Naive thymus-derived CD4-positive, alpha-beta T cell (primary cell): ENCODE measurements at regions of chr9 and their contacts with region 1.

Region 1: GRCh38 chr9:137034863-137035761 is 3.2 kb upstream of the FUT7 start:
- DNase-seq: peak; percentile 74 to 88 (median 82)
- ATAC-seq: peak; percentile 84
- H3K4me3 ChIP-seq: peak overlapping the region; percentile 34
- H3K4me3 Mint-ChIP-seq: peak overlapping the region; percentile 55 to 81 (median 66)
- H3K27ac ChIP-seq: no peak overlapping the region
- H3K27ac Mint-ChIP-seq: peak overlapping the region in 4 of 9 donors; percentile 19 to 85 (median 43)
- H3K4me1 ChIP-seq: peaks cover 36 to 41% of the 10 kb centered on the region in 2 donors
- H3K4me1 Mint-ChIP-seq: peaks cover 11 to 36% (median 24%) of the 10 kb centered on the region in 7 donors
- H3K27me3 ChIP-seq: no peaks in the 10 kb centered on the region
- H3K27me3 Mint-ChIP-seq: peaks cover 0 to 3% (median 0%) of the 10 kb centered on the region in 5 donors

Region 2: GRCh38 chr9:136949817-136950655 is 85.1 kb before region 1 on chr9:
- CTCF ChIA-PET with region 1: interaction called, 3 read pairs
- POLR2A ChIA-PET with region 1: no interaction called
- intact Hi-C with region 1: loop called (anchors 2 kb)
- DNase-seq: peak; percentile 89 to 97 (median 95)
- ATAC-seq: peak; percentile 97
- H3K4me3 ChIP-seq: peak overlapping the region; percentile 68
- H3K4me3 Mint-ChIP-seq: peak overlapping the region; percentile 74 to 93 (median 86)
- H3K27ac ChIP-seq: peak overlapping the region; percentile 81
- H3K27ac Mint-ChIP-seq: peak overlapping the region; percentile 66 to 91 (median 86)
- H3K4me1 ChIP-seq: peaks cover 4 to 13% of the 10 kb centered on the region in 2 donors
- H3K4me1 Mint-ChIP-seq: peaks cover 0 to 13% (median 0%) of the 10 kb centered on the region in 7 donors
- H3K27me3 ChIP-seq: no peaks in the 10 kb centered on the region
- H3K27me3 Mint-ChIP-seq: no peaks in the 10 kb centered on the region

Region 3: GRCh38 chr9:137000177-137000883 is 34.8 kb before region 1 on chr9:
- CTCF ChIA-PET with region 1: interaction called, 6 read pairs
- POLR2A ChIA-PET with region 1: interaction called, 3 read pairs
- intact Hi-C with region 1: loop called in 1 of 2 experiments (anchors 1 kb)
- DNase-seq: no peak
- ATAC-seq: peak; percentile 65
- H3K4me3 ChIP-seq: no peak overlapping the region
- H3K4me3 Mint-ChIP-seq: peak overlapping the region in 2 of 10 donors; percentile 33 to 57
- H3K27ac ChIP-seq: no peak overlapping the region
- H3K27ac Mint-ChIP-seq: peak overlapping the region in 3 of 9 donors; percentile 41 to 78 (median 42)
- H3K4me1 ChIP-seq: peaks cover 5 to 50% of the 10 kb centered on the region in 2 donors
- H3K4me1 Mint-ChIP-seq: peaks cover 7 to 39% (median 11%) of the 10 kb centered on the region in 7 donors
- H3K27me3 ChIP-seq: no peaks in the 10 kb centered on the region
- H3K27me3 Mint-ChIP-seq: peaks cover 0 to 12% (median 5%) of the 10 kb centered on the region in 5 donors

Region 4: DNA sequence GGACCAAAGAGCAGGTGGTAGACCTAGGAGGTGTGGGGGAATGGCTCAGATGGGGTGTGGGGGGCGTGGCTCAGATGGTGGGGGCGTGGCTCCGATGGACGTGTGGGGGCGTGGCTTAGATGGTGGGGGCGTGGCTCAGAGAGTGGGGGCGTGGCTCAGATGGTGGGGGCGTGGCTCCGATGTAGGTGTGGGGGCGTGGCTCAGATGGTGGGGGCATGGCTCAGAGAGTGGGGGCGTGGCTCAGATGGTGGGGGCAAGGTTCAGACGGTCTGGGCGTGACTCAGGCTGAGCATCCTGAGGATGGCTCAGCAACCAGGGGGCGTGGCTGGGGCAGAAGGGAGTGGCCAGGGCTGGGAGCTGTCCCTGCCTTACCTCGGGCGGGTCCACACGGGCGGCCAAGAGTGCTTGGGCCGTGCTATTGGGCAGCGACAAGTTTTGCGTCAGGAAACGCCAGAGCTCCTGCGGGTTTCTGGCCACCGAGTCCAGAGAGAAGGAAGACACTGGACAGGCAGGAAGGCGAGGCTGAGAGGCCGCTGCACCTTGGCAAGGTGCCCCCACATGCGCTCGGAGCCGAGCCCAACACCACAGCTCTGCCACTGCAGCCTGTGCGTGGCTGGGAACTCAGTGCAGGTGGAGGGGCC is 13.0 kb before region 1 on chr9:
- CTCF ChIA-PET with region 1: interaction called, 15 read pairs
- POLR2A ChIA-PET with region 1: interaction called, 7 read pairs
- intact Hi-C with region 1: no loop called
- DNase-seq: peak in 5 of 9 donors; percentile 35 to 76 (median 39)
- ATAC-seq: peak; percentile 95
- H3K4me3 ChIP-seq: no peak overlapping the region
- H3K4me3 Mint-ChIP-seq: no peak overlapping the region
- H3K27ac ChIP-seq: no peak overlapping the region
- H3K27ac Mint-ChIP-seq: peak overlapping the region in 3 of 9 donors; percentile 33 to 49 (median 41)
- H3K4me1 ChIP-seq: peaks cover 2 to 9% of the 10 kb centered on the region in 2 donors
- H3K4me1 Mint-ChIP-seq: peaks cover under 1 to 5% (median 2%) of the 10 kb centered on the region in 7 donors
- H3K27me3 ChIP-seq: no peaks in the 10 kb centered on the region
- H3K27me3 Mint-ChIP-seq: peaks cover 0 to under 1% (median 0%) of the 10 kb centered on the region in 5 donors